Activated CD4-positive, alpha-beta T cell treated with anti-CD3 and anti-CD28 coated beads, Interleukin-2, amount 10 ng/mL, durations not matched to agents 24 days and 14 days (primary cell): ENCODE measurements at regions of chr10 and their contacts with region 1.

Region 1: DNA sequence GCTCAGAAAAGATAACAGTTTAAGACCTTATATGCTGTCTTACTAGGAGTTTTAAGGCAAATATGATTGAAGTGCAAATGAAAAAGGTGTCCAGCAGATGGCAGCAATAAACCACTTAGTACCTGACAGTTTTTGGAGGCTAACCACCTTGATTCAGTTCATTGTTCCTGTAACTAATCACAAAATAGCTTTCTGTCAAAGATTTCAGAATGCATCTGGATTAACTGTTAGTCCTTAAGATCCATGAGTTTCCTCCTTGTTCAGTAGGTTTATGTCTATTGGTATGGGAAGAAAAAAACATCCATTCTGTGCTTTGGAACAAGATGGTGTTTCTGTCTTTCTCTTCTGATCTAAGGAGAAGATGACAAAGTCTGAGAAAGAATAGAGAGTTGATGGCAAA is 46.6 kb downstream of the CCSER2 start:
- DNase-seq: peak; percentile 82
- H3K4me3 Mint-ChIP-seq: no peak overlapping the region
- H3K27ac Mint-ChIP-seq: no peak overlapping the region
- H3K4me1 Mint-ChIP-seq: peaks cover 17% of the 10 kb centered on the region
- H3K27me3 Mint-ChIP-seq: no peaks in the 10 kb centered on the region

Region 2: GRCh38 chr10:84264611-84265141 is 110.3 kb before region 1 on chr10:
- intact Hi-C with region 1: loop called (anchors 1 kb)
- DNase-seq: peak; percentile 91
- H3K4me3 Mint-ChIP-seq: no peak overlapping the region
- H3K27ac Mint-ChIP-seq: no peak overlapping the region
- H3K4me1 Mint-ChIP-seq: peaks cover 16% of the 10 kb centered on the region
- H3K27me3 Mint-ChIP-seq: peaks cover 20% of the 10 kb centered on the region

Region 3: DNA sequence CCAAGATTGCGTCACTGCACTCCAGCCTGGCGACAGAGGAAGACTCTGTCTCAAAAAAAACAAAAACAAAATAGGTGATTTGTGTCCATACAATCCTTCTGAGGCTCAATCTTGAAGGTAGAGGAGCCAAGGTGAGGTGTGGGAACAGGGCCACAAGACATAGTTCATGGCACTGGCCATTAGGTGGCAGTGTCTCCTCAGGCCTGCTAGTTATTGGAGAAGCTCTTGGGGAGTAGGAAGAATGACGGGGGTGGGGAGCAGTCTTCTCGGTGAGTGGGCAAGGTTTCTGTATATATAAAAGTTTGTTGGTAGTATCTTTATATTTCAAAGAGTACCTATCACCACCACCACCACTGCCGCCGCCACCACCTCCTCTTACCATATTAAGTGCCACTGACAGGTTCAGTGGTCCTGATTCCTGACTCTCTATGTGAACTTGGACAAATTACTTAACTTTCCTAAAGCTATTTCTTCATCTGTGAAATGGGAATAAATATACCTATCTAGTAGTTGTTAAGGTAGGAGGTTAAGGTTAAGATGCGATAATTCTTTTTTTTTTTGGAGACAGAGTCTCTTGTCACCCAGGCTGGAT is 22.7 kb before region 1 on chr10:
- intact Hi-C with region 1: loop called (anchors 2 kb)
- DNase-seq: peak; percentile 88
- H3K4me3 Mint-ChIP-seq: no peak overlapping the region
- H3K27ac Mint-ChIP-seq: no peak overlapping the region
- H3K4me1 Mint-ChIP-seq: peaks cover 37% of the 10 kb centered on the region
- H3K27me3 Mint-ChIP-seq: no peaks in the 10 kb centered on the region

Region 4: GRCh38 chr10:84429926-84430520 is 55.0 kb after region 1 on chr10:
- intact Hi-C with region 1: loop called (anchors 5 kb)
- DNase-seq: peak; percentile 87
- H3K4me3 Mint-ChIP-seq: no peak overlapping the region
- H3K27ac Mint-ChIP-seq: no peak overlapping the region
- H3K4me1 Mint-ChIP-seq: peaks cover 12% of the 10 kb centered on the region
- H3K27me3 Mint-ChIP-seq: no peaks in the 10 kb centered on the region

Region 5: DNA sequence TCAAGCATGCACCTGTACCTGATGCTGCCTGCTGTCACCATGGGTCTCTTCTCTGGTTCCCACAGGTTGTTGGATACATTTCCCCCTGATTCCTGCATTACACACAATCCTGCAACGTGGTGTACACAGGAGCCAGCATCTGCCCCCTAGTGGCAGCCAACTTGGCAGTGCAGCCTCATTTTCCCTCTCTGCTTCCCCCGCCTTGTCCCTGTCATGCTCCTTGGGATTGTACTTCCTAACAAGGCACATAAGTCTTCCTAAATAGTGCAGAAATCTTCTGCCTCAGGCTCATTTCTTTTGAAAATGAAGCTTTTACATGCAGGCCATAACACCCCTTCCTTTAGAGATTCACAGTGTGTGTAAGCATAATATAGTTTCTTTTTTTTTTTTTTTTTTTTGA is 340.9 kb after region 1 on chr10:
- intact Hi-C with region 1: loop called (anchors 5 kb)
- DNase-seq: peak; percentile 65
- H3K4me3 Mint-ChIP-seq: no peak overlapping the region
- H3K27ac Mint-ChIP-seq: no peak overlapping the region
- H3K4me1 Mint-ChIP-seq: no peaks in the 10 kb centered on the region
- H3K27me3 Mint-ChIP-seq: peaks cover 4% of the 10 kb centered on the region